Posterior vena cava (tissue), 2 donors: ENCODE measurements at regions of chr10 and their contacts with region 1.

Region 1: DNA sequence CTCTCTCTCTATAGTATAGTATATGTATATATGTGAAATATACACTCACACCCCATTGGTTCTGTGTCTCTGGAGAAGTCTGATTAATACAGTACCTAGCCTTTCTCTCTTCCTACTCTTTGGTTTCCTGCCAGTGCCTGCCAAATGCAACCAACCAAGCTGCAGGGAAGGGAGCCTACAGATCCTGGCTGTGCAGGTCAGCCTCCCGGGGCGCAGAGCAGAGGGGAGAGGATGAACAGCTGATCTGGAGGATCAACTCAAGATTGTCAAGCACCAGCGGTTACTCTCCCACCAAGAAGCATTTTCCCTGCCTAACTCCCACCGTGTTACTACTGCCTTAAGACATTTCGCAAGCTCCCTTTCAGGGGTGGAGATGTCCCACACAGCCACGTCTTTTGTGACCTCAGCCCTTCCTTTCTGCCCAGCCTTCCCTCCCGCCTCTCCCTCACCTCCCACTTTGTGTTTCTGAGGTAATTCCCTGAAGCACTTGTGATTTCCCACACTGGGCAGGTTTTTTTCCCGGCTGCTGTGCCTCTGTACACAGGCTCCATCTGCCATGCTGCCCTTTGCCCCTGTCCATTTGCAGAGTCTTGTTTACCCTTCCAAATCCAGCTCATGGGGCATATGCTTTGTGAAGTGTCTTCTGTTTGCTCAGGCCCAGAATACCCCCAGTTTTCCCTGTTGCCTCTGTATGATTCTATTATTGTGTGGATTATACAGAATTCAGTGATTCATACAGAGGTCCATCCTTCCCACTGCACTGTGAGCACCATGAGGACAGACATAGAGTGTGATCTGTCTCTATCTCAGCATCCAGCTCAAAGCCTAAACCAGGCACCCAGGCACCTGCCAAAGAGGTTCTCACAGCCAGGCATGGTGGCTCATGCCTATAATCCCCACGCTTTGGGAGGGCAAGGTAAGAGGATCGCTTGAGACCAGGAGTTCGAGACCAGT is 40.9 kb upstream of the PAPSS2 start:
- DNase-seq: no peak

Region 2: GRCh38 chr10:87590705-87591588 is 27.8 kb before region 1 on chr10:
- intact Hi-C with region 1: loop called in 1 of 2 experiments (anchors 1 kb)
- DNase-seq: no peak